ENCODE measurements at regions of chr15 and their contacts with region 1.

Region 1: DNA sequence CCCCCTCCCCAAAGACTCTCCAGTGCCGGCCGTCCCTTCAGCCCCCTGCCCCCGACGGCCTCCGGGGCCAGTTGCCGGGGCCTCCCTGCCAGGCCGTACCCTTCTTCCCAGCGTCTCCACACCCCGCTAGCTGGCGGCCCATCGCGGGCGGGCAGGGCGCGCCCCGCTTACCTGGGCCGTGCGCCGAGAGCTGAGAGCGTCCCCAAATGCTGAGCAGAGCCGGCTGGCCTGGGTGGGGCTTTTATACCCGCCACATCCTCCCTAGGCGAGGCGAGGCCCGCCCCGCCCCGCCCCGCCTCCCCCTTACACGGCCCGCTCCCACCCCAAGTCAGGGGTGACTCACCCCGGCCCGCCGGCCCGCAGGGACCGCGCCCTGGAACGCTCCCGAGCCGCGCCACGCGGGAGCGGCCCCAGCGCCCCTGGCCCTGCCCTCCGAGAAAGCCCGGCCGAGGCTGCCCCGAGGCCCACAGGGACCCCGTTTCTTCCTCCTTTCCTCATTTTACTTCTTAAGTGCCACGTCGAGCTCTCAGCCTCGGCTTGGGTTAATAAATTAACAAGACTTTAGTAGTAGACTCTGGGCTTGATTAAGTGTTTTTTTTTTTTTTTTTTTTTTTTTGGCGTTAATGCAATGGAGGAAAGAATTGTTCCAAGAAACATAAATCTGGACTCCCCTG is at the start of gene ANXA2:
- DNase-seq: peak; percentile 76
- ATAC-seq: peak; percentile 75
- H3K4me3 Mint-ChIP-seq: peak within 1 kb of the TSS; percentile 96
- H3K27ac Mint-ChIP-seq: peak within 1 kb of the TSS; percentile 95
- H3K4me1 Mint-ChIP-seq: peaks cover 42% of the 10 kb centered on the region
- H3K27me3 Mint-ChIP-seq: no peaks in the 10 kb centered on the region
- CTCF ChIP-seq: no peak
- total RNA-seq, gene ANXA2: 218 and 231 TPM in 2 replicates

Region 2: GRCh38 chr15:59632714-59633113 is 765.2 kb before region 1 on chr15:
- CTCF ChIA-PET with region 1: no interaction called
- POLR2A ChIA-PET with region 1: no interaction called
- intact Hi-C with region 1: no loop called
- DNase-seq: no peak
- ATAC-seq: no peak
- H3K4me3 Mint-ChIP-seq: no peak overlapping the region
- H3K27ac Mint-ChIP-seq: no peak overlapping the region
- H3K4me1 Mint-ChIP-seq: no peaks in the 10 kb centered on the region
- H3K27me3 Mint-ChIP-seq: no peaks in the 10 kb centered on the region
- CTCF ChIP-seq: no peak

Region 3: DNA sequence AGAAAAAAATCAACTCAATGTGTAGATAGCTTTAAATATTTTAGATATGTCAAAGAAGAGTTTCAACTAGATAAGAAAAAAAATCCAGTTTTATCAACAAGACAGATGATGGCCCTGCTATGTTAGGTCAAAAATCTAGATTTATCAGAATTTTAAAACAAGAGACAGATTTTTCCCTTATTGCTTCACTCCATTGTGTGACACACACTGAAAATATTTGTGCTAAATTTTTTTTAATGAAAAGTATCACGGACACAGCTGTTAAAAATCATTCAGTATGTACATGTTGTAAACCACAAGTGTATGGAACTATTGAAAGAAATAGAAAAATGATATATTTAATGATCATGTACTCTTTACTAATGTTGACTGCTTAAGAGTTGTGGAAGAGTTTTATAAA is 350.2 kb before region 1 on chr15:
- CTCF ChIA-PET with region 1: no interaction called
- POLR2A ChIA-PET with region 1: no interaction called
- intact Hi-C with region 1: no loop called
- DNase-seq: no peak
- ATAC-seq: no peak
- H3K4me3 Mint-ChIP-seq: no peak overlapping the region
- H3K27ac Mint-ChIP-seq: no peak overlapping the region
- H3K4me1 Mint-ChIP-seq: no peaks in the 10 kb centered on the region
- H3K27me3 Mint-ChIP-seq: peaks cover 5% of the 10 kb centered on the region
- CTCF ChIP-seq: no peak

Region 4: DNA sequence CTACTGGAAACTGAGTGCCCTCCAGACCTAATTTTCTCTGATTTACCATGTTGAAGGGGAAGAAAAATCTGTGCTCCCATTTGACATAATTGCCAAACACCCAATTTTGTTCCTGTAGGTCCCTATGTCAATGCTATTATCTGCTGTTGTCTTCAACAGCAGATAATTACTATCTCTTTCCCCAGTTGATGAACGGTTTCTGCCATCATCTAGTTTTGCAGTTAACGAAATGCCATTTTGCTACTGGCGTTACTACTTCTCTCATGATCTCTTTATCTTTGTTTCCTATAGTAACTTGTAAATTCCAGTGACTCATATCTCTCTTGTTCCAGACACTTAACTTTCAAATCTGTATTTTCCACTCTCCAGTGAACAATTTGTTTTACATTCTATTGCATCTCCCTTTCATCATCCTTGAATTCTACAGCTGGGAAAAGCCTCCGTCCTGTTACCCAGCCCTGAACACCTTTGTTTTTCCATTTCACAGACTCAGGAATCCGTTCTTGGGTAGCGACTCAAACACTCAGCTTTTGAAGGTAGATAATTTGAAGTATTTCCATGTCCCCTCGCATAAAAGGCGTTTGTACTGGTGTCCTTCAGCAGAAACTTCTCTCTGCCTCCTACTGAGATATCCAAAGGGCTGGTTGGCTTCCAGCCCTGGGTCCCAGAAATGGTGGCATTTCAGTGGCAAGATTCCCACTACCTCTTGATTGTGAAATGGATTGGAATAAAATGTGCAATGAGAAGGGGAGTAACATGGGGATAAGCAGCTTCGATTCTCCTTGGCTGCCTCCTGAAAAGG is 282.1 kb before region 1 on chr15:
- CTCF ChIA-PET with region 1: no interaction called
- POLR2A ChIA-PET with region 1: no interaction called
- intact Hi-C with region 1: no loop called
- DNase-seq: no peak
- ATAC-seq: no peak
- H3K4me3 Mint-ChIP-seq: no peak overlapping the region
- H3K27ac Mint-ChIP-seq: no peak overlapping the region
- H3K4me1 Mint-ChIP-seq: no peaks in the 10 kb centered on the region
- H3K27me3 Mint-ChIP-seq: peaks cover 13% of the 10 kb centered on the region
- CTCF ChIP-seq: no peak

Region 5: DNA sequence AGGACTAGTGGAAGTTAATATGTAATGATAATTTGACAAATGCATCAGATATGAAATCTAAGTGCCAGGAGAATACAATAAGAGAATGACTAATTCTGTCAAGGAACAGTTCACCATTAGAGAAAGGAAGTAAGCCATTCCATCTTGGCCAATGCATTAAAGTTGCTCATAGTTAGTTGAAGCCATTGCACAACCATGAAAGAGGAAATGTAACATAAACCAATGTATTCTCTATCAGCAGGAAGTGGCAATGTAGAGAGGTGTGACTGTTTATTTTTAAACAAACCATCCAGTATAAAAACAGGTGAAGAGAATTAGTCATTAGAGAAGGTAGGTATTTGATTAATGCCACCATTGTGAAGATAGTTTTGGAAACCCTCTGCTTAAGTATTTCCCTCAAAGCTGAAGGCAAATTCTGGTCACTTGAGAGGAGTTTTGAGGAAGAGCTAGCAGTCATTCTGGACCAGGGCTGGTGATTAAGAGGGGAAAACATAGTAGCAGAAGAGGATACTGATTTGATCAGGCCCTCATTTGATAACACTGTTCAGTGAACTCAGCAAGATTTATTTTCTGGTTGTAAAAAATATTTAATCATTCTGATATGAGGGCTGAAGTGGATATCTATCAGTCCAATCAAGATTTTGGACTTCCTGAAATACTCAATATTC is 10.7 kb after region 1 on chr15:
- CTCF ChIA-PET with region 1: no interaction called
- POLR2A ChIA-PET with region 1: interaction called, 7 read pairs
- intact Hi-C with region 1: loop called (anchors 1 kb)
- DNase-seq: no peak
- ATAC-seq: peak; percentile 71
- H3K4me3 Mint-ChIP-seq: peak overlapping the region; percentile 5
- H3K27ac Mint-ChIP-seq: peak overlapping the region; percentile 16
- H3K4me1 Mint-ChIP-seq: peaks cover 18% of the 10 kb centered on the region
- H3K27me3 Mint-ChIP-seq: no peaks in the 10 kb centered on the region
- CTCF ChIP-seq: no peak

Region 6: GRCh38 chr15:60444289-60444912 is 46.5 kb after region 1 on chr15:
- CTCF ChIA-PET with region 1: no interaction called
- POLR2A ChIA-PET with region 1: interaction called, 8 read pairs
- intact Hi-C with region 1: loop called (anchors 5 kb)
- DNase-seq: no peak
- ATAC-seq: no peak
- H3K4me3 Mint-ChIP-seq: no peak overlapping the region
- H3K27ac Mint-ChIP-seq: no peak overlapping the region
- H3K4me1 Mint-ChIP-seq: no peaks in the 10 kb centered on the region
- H3K27me3 Mint-ChIP-seq: no peaks in the 10 kb centered on the region
- CTCF ChIP-seq: no peak

Region 7: GRCh38 chr15:60478566-60479360 is 80.9 kb after region 1 on chr15 and contains the start of gene ICE2:
- CTCF ChIA-PET with region 1: no interaction called
- POLR2A ChIA-PET with region 1: interaction called, 27 read pairs
- intact Hi-C with region 1: loop called (anchors 1 kb)
- DNase-seq: peak; percentile 91
- ATAC-seq: peak; percentile 93
- H3K4me3 Mint-ChIP-seq: peak within 1 kb of the TSS; percentile 99
- H3K27ac Mint-ChIP-seq: peak within 1 kb of the TSS; percentile 98
- H3K4me1 Mint-ChIP-seq: peaks cover 52% of the 10 kb centered on the region
- H3K27me3 Mint-ChIP-seq: no peaks in the 10 kb centered on the region
- CTCF ChIP-seq: no peak
- total RNA-seq, gene ICE2: 55.5 and 78.0 TPM in 2 replicates

Region 8: GRCh38 chr15:60945196-60945595 is 547.3 kb after region 1 on chr15:
- CTCF ChIA-PET with region 1: no interaction called
- POLR2A ChIA-PET with region 1: no interaction called
- intact Hi-C with region 1: no loop called
- DNase-seq: no peak
- ATAC-seq: no peak
- H3K4me3 Mint-ChIP-seq: no peak overlapping the region
- H3K27ac Mint-ChIP-seq: no peak overlapping the region
- H3K4me1 Mint-ChIP-seq: no peaks in the 10 kb centered on the region
- H3K27me3 Mint-ChIP-seq: peaks cover 22% of the 10 kb centered on the region
- CTCF ChIP-seq: no peak

Region 9: GRCh38 chr15:62060113-62060895 is 1662.4 kb after region 1 on chr15 and contains the start of gene VPS13C:
- CTCF ChIA-PET with region 1: no interaction called
- POLR2A ChIA-PET with region 1: no interaction called
- intact Hi-C with region 1: loop called (anchors 10 kb)
- DNase-seq: peak; percentile 93
- ATAC-seq: peak; percentile 84
- H3K4me3 Mint-ChIP-seq: peak within 1 kb of the TSS; percentile 94
- H3K27ac Mint-ChIP-seq: peak within 1 kb of the TSS; percentile 94
- H3K4me1 Mint-ChIP-seq: peaks cover 40% of the 10 kb centered on the region
- H3K27me3 Mint-ChIP-seq: no peaks in the 10 kb centered on the region
- CTCF ChIP-seq: peak; percentile 42
- total RNA-seq, gene VPS13C: 140 and 172 TPM in 2 replicates